ENCODE measurements at regions of chr5 and their contacts with region 1.

Region 1: DNA sequence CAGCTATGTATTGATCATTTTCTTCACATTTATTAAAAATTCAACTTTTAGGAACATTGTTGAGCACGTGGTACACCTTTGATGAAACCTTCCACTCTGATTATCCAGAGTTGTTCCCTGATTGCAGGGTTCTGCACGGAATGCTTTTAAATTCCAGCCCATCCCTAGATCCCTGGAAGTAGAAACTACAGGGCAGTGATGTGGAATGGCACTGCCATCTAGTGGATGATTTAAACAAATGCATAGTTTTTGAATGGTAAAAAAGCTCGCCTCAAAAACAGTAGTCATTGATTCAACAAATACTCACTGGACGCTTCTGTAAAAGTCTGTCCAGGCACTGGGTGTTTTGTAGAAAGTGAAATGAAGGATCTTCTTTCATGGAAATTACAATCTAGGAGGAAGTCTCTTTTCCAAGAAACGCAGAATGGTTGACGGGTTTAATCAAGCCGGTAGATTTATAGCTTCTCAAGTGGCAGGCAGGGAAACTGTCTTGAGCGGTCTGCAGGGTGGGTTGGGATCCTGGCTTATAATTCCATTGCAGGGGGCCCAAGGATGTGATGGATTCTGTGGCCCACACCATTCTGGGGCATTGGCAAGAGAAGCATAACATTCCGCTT is 118.4 kb downstream of the ARHGAP26 start:
- DNase-seq: peak; percentile 45 to 47
- H3K4me3 ChIP-seq: no peak overlapping the region
- H3K4me1 ChIP-seq: no peaks in the 10 kb centered on the region
- H3K27me3 ChIP-seq: no peaks in the 10 kb centered on the region

Region 2: GRCh38 chr5:142151436-142152383 is 736.9 kb before region 1 on chr5:
- in situ Hi-C with region 1: loop called (anchors 25 kb)
- DNase-seq: peak; percentile 37 to 71
- H3K4me3 ChIP-seq: no peak overlapping the region
- H3K4me1 ChIP-seq: no peaks in the 10 kb centered on the region
- H3K27me3 ChIP-seq: no peaks in the 10 kb centered on the region

Region 3: DNA sequence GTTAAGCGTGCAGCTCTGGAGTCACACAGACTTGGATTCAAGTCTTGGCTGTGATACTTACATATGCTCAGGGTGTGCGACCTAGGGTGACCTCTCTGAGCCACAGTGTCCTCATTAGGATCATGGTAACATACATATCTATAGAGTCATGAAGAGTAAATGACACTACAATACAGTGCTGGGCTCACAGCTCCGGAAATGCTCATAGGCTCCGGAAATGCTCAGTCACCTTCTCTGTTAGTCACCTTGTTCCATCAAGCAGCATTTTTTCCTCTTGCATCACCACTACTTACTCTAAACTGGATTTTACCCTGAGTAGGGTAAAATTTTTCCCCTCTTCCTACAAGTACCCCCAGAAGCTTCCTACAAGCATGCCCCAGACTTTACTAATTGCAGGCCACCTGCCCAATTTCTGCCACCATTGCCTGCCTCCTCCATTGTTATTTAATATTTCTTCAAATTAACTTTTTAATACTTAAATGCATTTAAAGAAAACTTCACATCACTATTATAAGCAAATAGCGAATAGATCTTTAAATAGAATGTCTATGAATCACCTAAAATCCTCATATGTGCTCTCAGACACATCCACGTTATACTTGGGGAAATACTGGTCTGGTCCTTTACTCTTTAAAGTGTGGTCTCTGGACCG is 416.2 kb before region 1 on chr5:
- in situ Hi-C with region 1: no loop called
- DNase-seq: no peak
- H3K4me3 ChIP-seq: no peak overlapping the region
- H3K4me1 ChIP-seq: no peaks in the 10 kb centered on the region
- H3K27me3 ChIP-seq: no peaks in the 10 kb centered on the region; the same call in 1 of the 2 replicates

Region 4: DNA sequence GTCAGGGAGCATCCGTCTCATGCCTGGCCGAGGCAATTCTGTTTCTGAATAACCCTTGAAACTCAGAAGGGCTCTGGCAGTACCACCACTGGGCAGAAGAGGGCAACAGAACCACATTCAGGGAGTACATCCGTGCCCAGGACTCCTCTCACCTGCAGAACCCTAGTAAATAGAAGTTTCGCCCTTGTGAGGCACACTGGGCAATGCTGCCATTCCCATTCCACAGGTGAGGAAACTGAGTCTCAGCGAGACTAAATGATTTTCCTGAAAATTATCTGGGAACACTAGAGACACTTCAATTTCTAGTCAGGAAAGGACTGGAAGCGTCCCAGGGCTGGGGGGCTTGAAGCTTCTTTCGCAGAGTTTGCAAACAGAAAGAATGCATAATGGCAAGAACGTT is 277.4 kb before region 1 on chr5:
- in situ Hi-C with region 1: loop called (anchors 25 kb)
- DNase-seq: peak; percentile 31 to 77
- H3K4me3 ChIP-seq: no peak overlapping the region
- H3K4me1 ChIP-seq: no peaks in the 10 kb centered on the region
- H3K27me3 ChIP-seq: peaks cover 27% of the 10 kb centered on the region

Region 5: GRCh38 chr5:142716963-142717362 is 171.6 kb before region 1 on chr5:
- in situ Hi-C with region 1: loop called (anchors 5 kb)
- DNase-seq: peak; percentile 46 to 65
- H3K4me3 ChIP-seq: no peak overlapping the region
- H3K4me1 ChIP-seq: no peaks in the 10 kb centered on the region; the same call in 1 of the 2 replicates
- H3K27me3 ChIP-seq: peaks cover 2% of the 10 kb centered on the region; the same call in 1 of the 2 replicates

Region 6: GRCh38 chr5:143290125-143290524 is 401.5 kb after region 1 on chr5:
- in situ Hi-C with region 1: no loop called
- DNase-seq: no peak
- H3K4me3 ChIP-seq: no peak overlapping the region
- H3K4me1 ChIP-seq: no peaks in the 10 kb centered on the region
- H3K27me3 ChIP-seq: no peaks in the 10 kb centered on the region